ENCODE measurements at regions of chr1 and their contacts with region 1.

Region 1: GRCh38 chr1:8510041-8510823 is 192.3 kb downstream of the SLC45A1 start:
- DNase-seq: no peak
- ATAC-seq: no peak
- H3K4me3 ChIP-seq: no peak overlapping the region
- H3K27ac ChIP-seq: no peak overlapping the region
- H3K4me1 ChIP-seq: no peaks in the 10 kb centered on the region
- H3K27me3 ChIP-seq: no peaks in the 10 kb centered on the region
- CTCF ChIP-seq: no peak
- EP300 ChIP-seq: no peak
- POLR2A ChIP-seq: no peak
- RAD21 ChIP-seq: no peak

Region 2: DNA sequence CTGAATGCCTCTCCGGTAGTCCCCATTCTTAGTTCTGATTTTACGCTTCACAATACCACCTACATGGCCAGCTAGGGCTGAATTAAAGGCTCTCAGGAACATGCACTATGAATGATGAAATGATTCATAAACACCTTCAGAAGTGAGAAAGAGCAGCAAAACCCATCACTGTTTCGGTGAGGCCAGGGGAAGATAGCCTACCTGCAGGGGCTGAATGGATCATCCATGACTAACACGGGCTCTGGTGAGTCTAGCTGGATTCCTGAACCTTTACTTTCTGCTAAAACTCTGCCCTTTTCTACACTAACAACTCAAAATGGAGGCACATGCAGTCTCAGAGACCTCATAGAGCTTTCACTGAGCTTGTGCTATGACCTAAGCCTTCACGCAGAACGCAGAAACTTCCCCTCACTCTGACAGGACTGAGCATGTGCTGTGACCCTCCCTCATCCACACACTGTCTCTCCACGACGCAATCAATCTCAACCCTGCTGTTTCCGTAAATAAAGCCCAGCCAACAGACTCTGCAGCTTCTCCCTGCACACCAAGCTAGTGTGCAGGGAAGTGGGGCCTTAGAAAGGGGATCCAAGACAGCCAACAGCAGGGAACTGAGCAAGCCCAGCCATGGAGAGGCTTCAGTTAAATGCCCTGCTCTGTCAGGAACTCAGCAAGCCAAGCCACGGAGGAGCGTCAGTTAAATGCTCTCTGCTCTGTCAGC is 15.5 kb after region 1 on chr1:
- CTCF ChIA-PET with region 1: interaction called, 3 read pairs
- POLR2A ChIA-PET with region 1: interaction called, 15 read pairs
- in situ Hi-C with region 1: no loop called
- intact Hi-C with region 1: no loop called
- DNase-seq: peak; percentile 28 to 88 (median 54)
- ATAC-seq: peak; percentile 96
- H3K4me3 ChIP-seq: peak overlapping the region; percentile 15
- H3K27ac ChIP-seq: peak overlapping the region; percentile 77
- H3K4me1 ChIP-seq: peaks cover 7 to 22% of the 10 kb centered on the region in 2 experiments; a peak in 4 of 5 replicates
- H3K27me3 ChIP-seq: no peaks in the 10 kb centered on the region
- CTCF ChIP-seq: peak in 1 of 3 experiments; percentile 4; a peak in 1 of 6 replicates
- EP300 ChIP-seq: peak; percentile 69
- POLR2A ChIP-seq: no peak
- RAD21 ChIP-seq: peak in 1 of 2 experiments; percentile 14; a peak in 1 of 4 replicates

Measured in K562 (cell line).